ENCODE measurements at regions of chr12 and their contacts with region 1.

Region 1: DNA sequence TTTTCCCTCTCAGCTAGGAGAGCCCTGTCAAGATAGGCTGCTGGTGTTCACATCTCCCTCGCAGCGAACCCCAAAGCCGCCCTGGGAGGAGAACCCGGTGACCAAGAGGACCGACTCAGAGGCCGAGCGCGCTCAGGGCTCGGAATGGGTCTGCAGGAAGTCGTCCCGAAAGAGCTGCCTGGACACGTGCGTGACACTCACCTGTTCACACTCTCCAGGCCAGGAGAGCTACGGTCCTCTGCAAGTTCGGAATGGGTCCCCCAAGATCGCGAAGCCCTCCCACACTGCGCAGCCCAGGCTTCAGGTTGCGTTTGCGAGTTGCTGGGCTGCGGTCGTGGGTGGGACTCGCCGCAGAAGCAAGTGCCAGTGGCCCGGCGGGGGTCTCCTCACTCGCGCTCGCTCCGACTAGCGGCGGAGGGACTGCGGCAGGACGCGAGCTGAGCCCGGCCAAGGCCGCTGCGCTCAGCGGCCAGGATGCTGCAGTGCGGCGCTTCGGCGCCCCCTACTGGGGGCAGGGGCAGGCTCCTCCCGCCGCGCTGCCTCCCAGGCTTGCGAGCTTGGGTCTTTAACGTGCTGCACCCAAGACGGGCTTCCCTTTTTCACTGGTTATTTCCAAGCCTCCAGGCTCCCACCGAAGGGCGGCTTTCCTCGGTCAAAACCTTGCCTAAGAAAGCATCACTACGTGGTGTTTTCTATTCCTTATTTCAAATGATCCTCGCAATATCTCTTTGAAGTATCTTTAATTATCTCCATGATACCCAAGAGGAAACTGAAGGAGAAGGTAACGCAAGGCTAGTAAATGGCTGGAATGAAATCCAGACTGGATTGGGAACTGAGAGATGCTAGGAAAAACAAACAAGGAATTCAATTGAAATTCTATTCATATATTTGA is at the start of gene RERG:
- DNase-seq: peak; percentile 44 to 89 (median 74)
- H3K4me3 ChIP-seq: peak within 1 kb of the TSS; percentile 37 to 80 (median 67)
- H3K27ac ChIP-seq: peak within 1 kb of the TSS in 31 of 59 donors; percentile 13 to 81 (median 59)
- H3K27me3 ChIP-seq: no peaks in the 10 kb centered on the region
- CTCF ChIP-seq: peak; percentile 77 to 100 (median 97)
- total RNA-seq, gene RERG: 4.5 to 31.5 (median 13.9) TPM

Region 2: DNA sequence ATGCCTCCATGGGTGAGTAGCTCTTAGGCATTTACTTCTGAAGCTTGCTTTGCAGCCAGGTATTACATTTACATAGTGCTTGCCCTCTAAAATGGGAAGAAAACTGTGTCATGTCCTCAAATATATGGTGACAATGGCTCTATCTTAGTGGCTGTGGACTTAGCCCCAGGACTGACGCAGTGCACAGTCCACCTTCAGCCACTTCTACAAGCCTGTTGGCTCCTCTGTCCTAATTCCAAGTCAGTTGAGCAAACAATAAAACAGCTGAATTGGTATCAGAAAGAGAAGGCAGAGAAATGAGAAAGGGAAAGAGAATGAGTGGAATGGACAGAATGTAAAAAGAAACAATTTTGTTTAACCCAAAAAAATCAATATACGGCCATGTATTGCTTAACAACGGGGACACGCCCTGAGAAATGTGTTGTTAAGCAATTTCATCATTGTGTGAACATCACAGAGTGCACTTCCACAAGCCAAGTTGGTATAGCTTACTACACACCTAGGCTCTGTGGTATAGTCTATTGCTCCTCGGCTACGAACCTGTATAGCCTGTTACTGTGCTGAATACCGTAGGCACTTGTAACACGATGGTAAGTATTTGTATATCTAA is 1333.4 kb before region 1 on chr12:
- intact Hi-C with region 1: no loop called
- DNase-seq: no peak
- H3K4me3 ChIP-seq: no peak overlapping the region
- H3K27ac ChIP-seq: no peak overlapping the region
- H3K27me3 ChIP-seq: peaks cover 0 to 11% (median 0%) of the 10 kb centered on the region in 45 donors
- CTCF ChIP-seq: no peak

Region 3: DNA sequence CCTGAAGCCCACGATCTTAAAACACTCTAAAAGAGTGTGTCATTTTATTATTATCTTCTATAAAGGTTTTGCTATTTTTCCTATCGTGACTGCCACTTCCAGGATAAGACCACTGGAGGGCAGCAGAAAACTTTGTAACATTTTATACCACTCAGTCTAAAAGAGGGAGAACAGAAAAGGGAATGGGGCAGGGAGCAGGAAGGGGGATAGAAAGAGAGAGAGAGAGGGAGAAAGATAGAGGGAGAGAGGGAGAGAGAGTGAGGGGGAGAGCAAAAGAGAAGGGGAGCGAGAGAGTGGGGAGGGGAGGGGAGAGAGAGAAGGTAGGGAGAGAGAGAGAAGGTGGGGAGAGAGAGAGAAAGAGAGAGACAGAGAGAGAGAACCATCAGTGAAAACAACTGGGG is 375.9 kb before region 1 on chr12:
- intact Hi-C with region 1: loop called in 1 of 2 experiments (anchors 2 kb)
- DNase-seq: peak in 2 of 10 donors; percentile 38 to 50
- H3K4me3 ChIP-seq: no peak overlapping the region
- H3K27ac ChIP-seq: no peak overlapping the region
- H3K27me3 ChIP-seq: no peaks in the 10 kb centered on the region
- CTCF ChIP-seq: peak; percentile 39 to 87 (median 75)

Region 4: DNA sequence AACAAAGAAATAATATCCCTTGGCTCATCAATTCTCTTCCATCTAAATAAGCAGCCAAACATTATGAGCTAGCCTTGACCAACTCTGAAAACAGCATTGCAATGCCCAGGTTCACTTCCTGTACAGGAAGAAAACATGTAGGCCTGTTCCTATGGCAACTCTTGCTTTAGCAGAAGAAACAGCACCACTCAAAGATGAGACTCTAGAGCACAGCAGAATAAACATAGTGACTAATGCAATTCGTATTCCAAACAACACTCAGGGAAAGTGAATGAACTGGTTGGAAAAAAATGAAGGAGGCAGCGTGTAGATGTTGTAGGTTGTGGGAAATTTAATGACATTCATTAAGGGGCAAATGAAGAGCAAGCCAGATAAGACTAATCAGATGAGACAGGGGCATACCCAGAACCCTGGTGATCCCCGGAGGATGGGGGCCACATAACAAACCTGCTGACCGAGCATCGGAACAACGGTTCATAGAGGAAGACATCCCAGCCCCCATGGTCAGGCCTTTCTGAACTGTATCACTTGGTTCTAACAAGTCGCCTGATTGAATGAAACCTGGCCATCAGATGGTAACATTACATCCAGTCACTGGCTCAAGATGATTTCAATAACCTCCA is 268.8 kb before region 1 on chr12:
- intact Hi-C with region 1: no loop called
- DNase-seq: no peak
- H3K4me3 ChIP-seq: no peak overlapping the region
- H3K27ac ChIP-seq: peak overlapping the region in 22 of 59 donors; percentile 2 to 74 (median 52)
- H3K27me3 ChIP-seq: no peaks in the 10 kb centered on the region
- CTCF ChIP-seq: no peak

Region 5: DNA sequence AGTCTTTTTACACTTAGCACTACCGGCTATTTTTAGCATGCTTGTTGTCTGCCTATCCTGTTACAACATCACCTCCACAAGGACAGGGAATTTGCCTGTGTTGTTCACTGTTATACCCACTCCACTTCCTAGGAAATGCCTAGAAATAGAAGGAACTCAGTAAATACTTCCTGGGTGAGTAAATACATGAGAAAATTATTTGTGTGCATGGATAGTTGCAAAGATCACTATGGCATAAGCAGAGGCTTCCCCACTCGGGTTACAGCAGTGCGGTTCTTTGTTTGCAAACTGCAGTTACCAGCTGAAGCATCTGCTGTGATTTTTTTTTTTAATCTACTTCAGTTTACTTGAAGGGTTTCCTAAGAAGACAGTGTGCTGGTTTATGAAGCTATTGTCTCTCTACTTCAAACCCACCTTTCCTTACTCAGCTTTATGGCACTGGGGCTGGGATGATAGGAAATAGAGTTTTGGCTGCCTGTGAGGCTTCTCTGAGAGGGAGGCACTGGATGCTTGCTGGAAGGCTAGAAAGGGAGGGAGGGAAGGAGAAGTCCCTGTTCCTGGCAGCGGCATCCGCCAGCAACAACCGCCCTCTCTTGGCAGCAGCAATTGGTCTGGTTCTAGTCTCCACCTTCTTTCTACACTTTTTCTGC is 219.4 kb before region 1 on chr12:
- intact Hi-C with region 1: loop called (anchors 5 kb)
- DNase-seq: peak; percentile 10 to 67 (median 56)
- H3K4me3 ChIP-seq: peak overlapping the region in 25 of 59 donors; percentile 0 to 36 (median 14)
- H3K27ac ChIP-seq: no peak overlapping the region
- H3K27me3 ChIP-seq: peaks cover 0 to 21% (median 0%) of the 10 kb centered on the region in 45 donors
- CTCF ChIP-seq: peak in 10 of 56 donors; percentile 6 to 24 (median 22)

Region 6: DNA sequence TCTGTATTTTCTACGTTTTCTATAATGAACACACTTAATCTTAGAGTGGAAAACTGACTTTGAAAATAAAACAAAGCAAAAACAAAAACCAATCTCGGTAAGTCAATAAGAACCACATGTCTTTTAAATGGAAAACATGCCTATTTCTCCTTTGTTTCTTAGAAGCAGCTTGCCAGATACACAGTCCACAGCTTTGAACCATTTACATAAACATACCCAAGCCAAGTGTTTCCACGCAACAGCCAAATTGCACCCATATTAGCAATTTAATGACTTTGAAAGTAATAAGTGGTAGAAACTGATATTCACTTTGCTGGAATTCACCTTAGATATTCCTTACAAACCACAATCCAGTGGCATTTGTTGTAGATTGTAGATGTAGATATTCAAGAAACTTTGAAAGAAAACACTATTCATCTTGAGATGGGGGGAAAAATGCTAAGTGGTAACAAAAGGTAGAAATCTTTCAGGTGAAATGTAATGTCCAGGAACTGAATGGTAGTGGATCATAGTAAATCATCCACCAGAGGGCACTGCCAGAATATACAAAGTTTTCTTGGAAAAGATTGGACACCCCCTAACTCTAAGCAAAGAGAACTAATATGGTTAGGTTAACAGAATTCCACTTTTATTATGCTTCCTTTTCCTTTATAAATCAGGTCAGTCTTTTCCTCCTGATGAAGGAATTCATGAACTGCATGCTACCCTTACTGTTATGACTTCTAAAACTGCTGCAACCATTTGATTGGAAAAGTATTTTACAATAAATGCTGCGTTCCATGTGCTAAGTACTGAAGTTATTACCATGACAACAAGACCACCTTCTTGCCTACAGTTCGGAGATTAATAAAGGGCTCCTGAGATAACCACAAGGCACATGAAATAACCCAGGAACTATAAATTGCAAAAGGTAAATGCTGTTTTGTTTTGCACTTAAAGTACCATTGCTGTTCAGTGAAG is 69.8 kb before region 1 on chr12:
- intact Hi-C with region 1: loop called (anchors 1 to 2 kb)
- DNase-seq: no peak
- H3K4me3 ChIP-seq: peak overlapping the region in 1 of 59 donors; percentile 11
- H3K27ac ChIP-seq: peak overlapping the region in 8 of 59 donors; percentile 5 to 52 (median 22)
- H3K27me3 ChIP-seq: peaks cover 0 to 6% (median 0%) of the 10 kb centered on the region in 45 donors
- CTCF ChIP-seq: peak; percentile 53 to 88 (median 71)

Measured in dorsolateral prefrontal cortex (tissue), 120 donors.